OCI-LY7 (cell line): ENCODE measurements at regions of chr3 and their contacts with region 1.

Region 1: GRCh38 chr3:15384510-15385237 is 42.7 kb downstream of the METTL6 start:
- DNase-seq: peak; percentile 89
- H3K4me3 ChIP-seq: peak overlapping the region; percentile 45
- H3K27ac ChIP-seq: peak overlapping the region; percentile 96
- H3K4me1 ChIP-seq: peaks cover 90% of the 10 kb centered on the region
- CTCF ChIP-seq: no peak

Region 2: DNA sequence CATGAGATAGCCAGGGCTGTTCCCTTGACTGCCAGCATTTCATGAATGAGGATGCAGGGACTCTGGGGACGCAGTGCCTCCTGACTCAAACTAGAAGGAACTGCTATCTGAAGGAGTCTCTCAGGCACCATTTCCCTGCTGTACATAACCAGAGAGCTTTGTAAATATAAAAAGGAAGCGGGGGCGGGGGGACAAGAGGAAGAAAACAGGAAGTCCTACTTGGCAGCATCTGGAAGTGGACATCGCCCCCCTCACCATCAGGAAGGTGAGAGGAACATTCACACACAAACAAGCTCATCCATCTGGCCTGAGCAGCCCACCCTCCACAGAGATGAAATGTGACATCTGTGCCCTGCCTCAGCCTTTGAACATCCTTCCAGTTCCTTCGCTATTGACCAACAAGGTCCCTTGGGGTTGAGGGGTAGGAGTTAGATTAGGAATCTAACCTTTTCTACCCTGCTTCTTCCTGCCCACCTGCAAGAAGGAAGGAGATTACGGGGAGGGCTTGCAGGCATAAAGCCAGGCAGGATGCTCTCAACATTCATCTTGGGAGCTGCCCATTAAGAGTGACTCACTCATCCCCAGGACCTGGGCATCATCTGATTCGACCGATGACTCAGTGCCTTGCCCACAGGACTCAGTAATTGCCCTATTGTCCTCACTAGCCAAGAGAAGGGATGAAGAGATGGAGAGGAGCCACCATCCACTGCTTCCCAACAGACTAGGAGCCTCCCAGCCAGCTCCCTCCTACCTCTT is 84.2 kb before region 1 on chr3:
- CTCF ChIA-PET with region 1: interaction called, 12 read pairs
- POLR2A ChIA-PET with region 1: interaction called, 3 read pairs
- intact Hi-C with region 1: no loop called
- DNase-seq: no peak
- H3K4me3 ChIP-seq: no peak overlapping the region
- H3K27ac ChIP-seq: no peak overlapping the region
- H3K4me1 ChIP-seq: peaks cover 11% of the 10 kb centered on the region
- CTCF ChIP-seq: no peak

Region 3: GRCh38 chr3:15345608-15346137 is 39.0 kb before region 1 on chr3:
- CTCF ChIA-PET with region 1: no interaction called
- POLR2A ChIA-PET with region 1: interaction called, 14 read pairs
- intact Hi-C with region 1: loop called (anchors 1 kb)
- DNase-seq: peak; percentile 87
- H3K4me3 ChIP-seq: peak overlapping the region; percentile 5
- H3K27ac ChIP-seq: peak overlapping the region; percentile 91
- H3K4me1 ChIP-seq: peaks cover 60% of the 10 kb centered on the region
- CTCF ChIP-seq: no peak

Region 4: DNA sequence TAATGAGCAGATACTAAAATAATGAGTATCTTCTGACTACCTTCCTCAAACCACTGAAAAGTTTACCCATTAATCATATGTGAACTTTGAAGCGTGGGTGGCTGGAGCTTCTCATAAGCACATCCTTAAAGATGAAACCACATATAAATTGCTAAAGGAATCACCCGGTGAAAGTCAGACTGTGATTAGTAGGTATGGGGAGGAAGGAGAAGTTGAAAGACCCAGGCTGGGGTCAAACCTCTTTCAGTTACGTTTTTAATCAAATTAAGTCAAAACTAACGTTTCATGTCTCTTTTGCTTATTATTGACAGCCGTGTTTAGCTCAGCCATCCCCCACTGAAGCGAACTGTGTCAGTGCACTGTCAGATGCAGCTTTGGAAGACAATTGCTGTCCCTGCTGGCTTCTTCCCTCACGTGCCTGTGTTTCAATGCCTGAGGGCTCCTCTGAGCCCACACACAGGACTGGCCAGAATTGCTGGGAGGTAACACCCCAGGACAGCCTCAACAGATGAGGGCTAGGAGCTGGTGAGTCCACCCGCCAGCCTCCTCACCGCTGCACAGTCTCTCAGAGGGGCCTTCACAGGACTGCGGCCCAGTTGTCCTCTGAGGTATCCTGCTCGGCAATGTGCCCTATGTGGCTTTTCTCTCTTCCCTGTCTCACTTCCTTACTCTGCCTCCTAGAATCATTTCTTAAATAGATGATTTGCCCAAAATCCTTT is 23.0 kb before region 1 on chr3:
- CTCF ChIA-PET with region 1: interaction called, 3 read pairs
- POLR2A ChIA-PET with region 1: interaction called, 13 read pairs
- intact Hi-C with region 1: no loop called
- DNase-seq: peak; percentile 67
- H3K4me3 ChIP-seq: peak overlapping the region; percentile 53
- H3K27ac ChIP-seq: peak overlapping the region; percentile 84
- H3K4me1 ChIP-seq: peaks cover 47% of the 10 kb centered on the region
- CTCF ChIP-seq: no peak

Region 5: GRCh38 chr3:15399970-15400369 is 15.3 kb after region 1 on chr3:
- CTCF ChIA-PET with region 1: no interaction called
- POLR2A ChIA-PET with region 1: interaction called, 8 read pairs
- intact Hi-C with region 1: loop called (anchors 2 kb)
- DNase-seq: no peak
- H3K4me3 ChIP-seq: no peak overlapping the region
- H3K27ac ChIP-seq: no peak overlapping the region
- H3K4me1 ChIP-seq: peaks cover 11% of the 10 kb centered on the region
- CTCF ChIP-seq: no peak

Region 6: DNA sequence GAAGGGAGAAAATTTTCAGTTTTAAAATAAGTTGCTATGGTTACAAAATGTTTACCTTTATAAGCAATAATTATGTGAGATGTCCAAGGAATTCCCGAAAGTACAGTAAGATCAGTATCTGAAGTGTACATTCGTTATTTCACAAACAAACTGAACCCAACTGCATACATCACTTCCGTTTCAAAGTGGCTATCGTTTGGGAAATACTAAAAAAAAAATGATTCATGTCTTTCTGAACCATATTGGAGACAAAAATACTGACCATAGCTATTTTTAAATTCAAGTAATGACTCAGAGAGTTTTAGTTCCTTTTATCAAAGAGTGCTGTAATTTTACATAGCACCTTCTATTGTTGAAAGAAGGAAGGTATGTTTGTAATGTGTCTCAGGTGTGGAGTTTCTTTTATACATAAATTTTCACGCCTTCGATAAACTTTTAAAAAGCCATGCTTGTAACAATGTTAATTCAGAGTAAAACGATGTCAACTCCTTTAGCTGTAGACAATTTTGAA is 421.1 kb after region 1 on chr3:
- CTCF ChIA-PET with region 1: no interaction called
- POLR2A ChIA-PET with region 1: no interaction called
- intact Hi-C with region 1: no loop called
- DNase-seq: peak; percentile 33
- H3K4me3 ChIP-seq: peak overlapping the region; percentile 9
- H3K27ac ChIP-seq: no peak overlapping the region
- H3K4me1 ChIP-seq: peaks cover 15% of the 10 kb centered on the region
- CTCF ChIP-seq: no peak

Region 7: GRCh38 chr3:15820911-15821310 is 436.2 kb after region 1 on chr3:
- CTCF ChIA-PET with region 1: no interaction called
- POLR2A ChIA-PET with region 1: no interaction called
- intact Hi-C with region 1: no loop called
- DNase-seq: no peak
- H3K4me3 ChIP-seq: no peak overlapping the region
- H3K27ac ChIP-seq: no peak overlapping the region
- H3K4me1 ChIP-seq: peaks cover 25% of the 10 kb centered on the region
- CTCF ChIP-seq: no peak